K562 (cell line): ENCODE measurements at regions of chr18 and their contacts with region 1.

Region 1: DNA sequence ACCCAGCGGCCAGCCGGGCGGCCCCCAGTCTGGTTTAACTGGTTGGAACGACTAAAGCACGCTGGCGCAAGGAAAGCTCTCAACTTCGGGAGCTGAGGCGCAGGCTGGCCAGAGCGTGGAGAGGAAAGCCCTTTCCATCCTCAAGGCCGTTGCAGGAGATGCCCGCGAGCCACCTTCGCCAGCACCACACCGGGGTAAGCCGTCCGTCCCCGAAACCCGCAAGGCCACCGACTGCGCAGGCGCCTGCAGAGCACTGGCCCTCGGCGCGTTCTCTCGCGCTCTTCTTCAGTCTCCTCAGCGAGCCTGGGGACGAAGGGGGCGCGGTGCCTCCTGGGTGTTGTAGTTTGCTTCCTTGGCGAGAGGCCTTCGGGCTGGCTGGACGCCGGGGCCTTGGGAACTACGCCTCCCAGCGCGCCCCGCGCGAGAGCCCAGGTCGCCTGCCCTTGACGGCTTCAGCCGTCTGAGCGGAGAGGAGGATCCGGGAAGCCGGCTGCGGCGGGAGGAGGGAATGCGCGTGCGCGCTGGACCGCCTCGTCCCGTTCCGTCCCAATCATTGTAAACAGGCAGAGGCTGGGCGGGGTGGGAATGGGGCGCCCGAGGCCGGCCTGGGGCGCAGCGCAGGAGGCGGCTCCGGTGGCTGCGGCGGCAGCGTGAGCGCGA is at the start of gene RALBP1:
- DNase-seq: peak; percentile 96 to 100 (median 98)
- ATAC-seq: peak; percentile 97
- H3K4me3 ChIP-seq: peak within 1 kb of the TSS; percentile 68
- H3K27ac ChIP-seq: peak within 1 kb of the TSS; percentile 95
- H3K4me1 ChIP-seq: peaks cover 17 to 28% of the 10 kb centered on the region in 2 experiments
- H3K27me3 ChIP-seq: no peaks in the 10 kb centered on the region
- CTCF ChIP-seq: peak; percentile 45 to 53 (median 50); a peak in 5 of 6 replicates
- EP300 ChIP-seq: no peak; the same call in 1 of the 2 replicates
- POLR2A ChIP-seq: peak; percentile 98
- RAD21 ChIP-seq: peak; percentile 59 to 68; a peak in 3 of 4 replicates
- polyA plus RNA-seq, gene RALBP1: 10.9 to 13.1 TPM

Region 2: DNA sequence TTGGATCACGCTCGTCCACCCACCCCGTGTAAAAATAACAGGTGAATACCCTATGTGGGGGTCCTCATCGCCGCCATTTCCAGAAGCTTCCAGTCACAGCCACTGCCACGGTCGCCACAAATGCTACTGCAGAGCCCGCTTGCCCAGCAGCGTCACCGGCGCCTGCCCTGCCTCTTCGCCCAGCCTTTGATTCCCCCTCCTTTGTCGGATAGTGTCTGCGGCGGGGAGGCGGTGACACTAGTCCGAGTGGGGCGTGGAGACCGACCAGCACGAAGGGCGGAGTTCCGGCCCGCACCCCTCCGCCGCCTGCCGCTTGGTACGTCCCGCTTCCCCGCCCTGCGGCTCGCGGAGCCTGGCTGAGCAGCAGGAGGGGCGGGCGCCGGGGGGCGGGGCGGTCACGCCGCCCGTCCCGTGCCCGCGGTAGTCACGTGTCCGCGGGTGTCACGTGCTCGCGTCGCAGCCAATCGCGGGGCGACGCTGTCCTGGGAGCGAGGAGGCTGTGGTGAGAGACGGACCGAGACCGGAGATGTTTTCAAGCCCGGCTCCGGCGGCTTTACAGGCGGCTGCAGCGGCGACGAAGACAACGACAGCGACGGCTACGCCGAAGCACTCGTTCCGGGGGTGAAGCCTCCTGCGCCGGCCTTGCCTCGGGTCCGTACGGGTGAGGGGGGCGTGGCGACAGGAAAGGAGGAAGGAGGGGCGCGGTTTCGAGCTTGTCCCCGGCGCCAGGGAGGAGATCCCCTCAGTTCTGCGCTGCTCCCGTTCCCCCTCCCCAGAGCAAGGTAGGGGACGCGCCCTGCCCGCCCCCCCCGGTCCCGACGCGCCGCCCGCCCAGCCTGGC is 338.6 kb before region 1 on chr18 and contains the start of gene ANKRD12:
- CTCF ChIA-PET with region 1: no interaction called
- POLR2A ChIA-PET with region 1: no interaction called
- in situ Hi-C with region 1: no loop called
- intact Hi-C with region 1: loop called (anchors 5 kb)
- DNase-seq: peak; percentile 98 to 99 (median 99)
- ATAC-seq: peak; percentile 86
- H3K4me3 ChIP-seq: peak within 1 kb of the TSS; percentile 75
- H3K27ac ChIP-seq: peak within 1 kb of the TSS; percentile 90
- H3K4me1 ChIP-seq: peaks cover 9 to 14% of the 10 kb centered on the region in 2 experiments; a peak in 4 of 5 replicates
- H3K27me3 ChIP-seq: no peaks in the 10 kb centered on the region
- CTCF ChIP-seq: no peak
- EP300 ChIP-seq: peak; percentile 61
- POLR2A ChIP-seq: peak; percentile 82
- RAD21 ChIP-seq: no peak
- polyA plus RNA-seq, gene ANKRD12: 12.3 to 15.7 TPM

Region 3: GRCh38 chr18:9334329-9334972 is 140.7 kb before region 1 on chr18 and contains the start of gene TWSG1:
- CTCF ChIA-PET with region 1: no interaction called
- POLR2A ChIA-PET with region 1: no interaction called
- in situ Hi-C with region 1: no loop called
- intact Hi-C with region 1: loop called (anchors 5 kb)
- DNase-seq: peak; percentile 97 to 100 (median 100)
- ATAC-seq: peak; percentile 97
- H3K4me3 ChIP-seq: peak within 1 kb of the TSS; percentile 79
- H3K27ac ChIP-seq: peak within 1 kb of the TSS; percentile 77
- H3K4me1 ChIP-seq: peaks cover 18% of the 10 kb centered on the region in 2 experiments
- H3K27me3 ChIP-seq: no peaks in the 10 kb centered on the region
- CTCF ChIP-seq: peak in 2 of 3 experiments; percentile 53 to 69; a peak in 4 of 6 replicates
- EP300 ChIP-seq: no peak
- POLR2A ChIP-seq: peak; percentile 67
- RAD21 ChIP-seq: no peak
- polyA plus RNA-seq, gene TWSG1: 10.4 to 11.3 TPM

Region 4: GRCh38 chr18:9404565-9405060 is 70.5 kb before region 1 on chr18:
- CTCF ChIA-PET with region 1: no interaction called
- POLR2A ChIA-PET with region 1: no interaction called
- in situ Hi-C with region 1: no loop called
- intact Hi-C with region 1: loop called (anchors 2 kb)
- DNase-seq: peak; percentile 69 to 91 (median 80)
- ATAC-seq: peak; percentile 92
- H3K4me3 ChIP-seq: peak overlapping the region; percentile 22
- H3K27ac ChIP-seq: peak overlapping the region; percentile 89
- H3K4me1 ChIP-seq: peaks cover 21% of the 10 kb centered on the region in 2 experiments; a peak in 4 of 5 replicates
- H3K27me3 ChIP-seq: no peaks in the 10 kb centered on the region
- CTCF ChIP-seq: no peak
- EP300 ChIP-seq: peak; percentile 70
- POLR2A ChIP-seq: peak; percentile 79
- RAD21 ChIP-seq: no peak; a peak in 2 of 4 replicates

Region 5: GRCh38 chr18:10482985-10483949 is 1008.2 kb after region 1 on chr18:
- CTCF ChIA-PET with region 1: no interaction called
- POLR2A ChIA-PET with region 1: no interaction called
- in situ Hi-C with region 1: no loop called
- intact Hi-C with region 1: no loop called
- DNase-seq: no peak
- ATAC-seq: no peak
- H3K4me3 ChIP-seq: no peak overlapping the region
- H3K27ac ChIP-seq: no peak overlapping the region
- H3K4me1 ChIP-seq: no peaks in the 10 kb centered on the region
- H3K27me3 ChIP-seq: peaks cover 38 to 51% of the 10 kb centered on the region in 2 experiments
- CTCF ChIP-seq: no peak
- EP300 ChIP-seq: no peak
- POLR2A ChIP-seq: no peak
- RAD21 ChIP-seq: no peak